ENCODE measurements at regions of chr16 and their contacts with region 1.

Region 1: DNA sequence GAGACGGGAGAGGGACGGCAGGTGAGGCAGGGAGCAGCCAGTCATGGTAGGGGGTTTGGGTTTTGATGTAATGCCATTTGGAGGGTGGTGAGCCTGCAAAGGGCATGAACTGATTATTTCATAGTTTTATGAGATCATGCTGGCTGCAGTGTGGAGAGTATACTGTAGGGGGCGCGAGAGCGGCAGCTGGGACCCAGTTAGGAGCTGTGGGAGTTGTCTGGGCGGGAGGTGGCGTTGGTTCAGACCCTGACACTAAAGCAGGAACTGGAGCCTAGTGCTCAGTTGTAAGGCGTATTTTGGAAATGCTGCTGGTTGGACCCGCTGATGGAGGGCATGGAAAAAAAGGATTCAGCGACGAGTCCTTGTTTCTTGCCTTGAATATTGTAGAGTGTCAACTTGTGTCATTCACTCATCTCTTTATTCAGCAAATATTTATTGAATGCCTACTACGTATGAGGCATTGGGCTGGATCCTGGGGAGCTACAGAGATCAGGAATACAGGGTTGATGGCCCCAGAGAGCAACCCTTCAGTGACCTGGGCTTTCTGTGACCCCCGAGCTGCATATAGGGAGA is 23.7 kb upstream of the KDM8 start:
- DNase-seq: peak; percentile 42
- H3K4me3 ChIP-seq: no peak overlapping the region
- H3K27ac ChIP-seq: no peak overlapping the region
- H3K4me1 ChIP-seq: peaks cover 13% of the 10 kb centered on the region
- H3K27me3 ChIP-seq: no peaks in the 10 kb centered on the region
- CTCF ChIP-seq: peak; percentile 82 to 90

Region 2: DNA sequence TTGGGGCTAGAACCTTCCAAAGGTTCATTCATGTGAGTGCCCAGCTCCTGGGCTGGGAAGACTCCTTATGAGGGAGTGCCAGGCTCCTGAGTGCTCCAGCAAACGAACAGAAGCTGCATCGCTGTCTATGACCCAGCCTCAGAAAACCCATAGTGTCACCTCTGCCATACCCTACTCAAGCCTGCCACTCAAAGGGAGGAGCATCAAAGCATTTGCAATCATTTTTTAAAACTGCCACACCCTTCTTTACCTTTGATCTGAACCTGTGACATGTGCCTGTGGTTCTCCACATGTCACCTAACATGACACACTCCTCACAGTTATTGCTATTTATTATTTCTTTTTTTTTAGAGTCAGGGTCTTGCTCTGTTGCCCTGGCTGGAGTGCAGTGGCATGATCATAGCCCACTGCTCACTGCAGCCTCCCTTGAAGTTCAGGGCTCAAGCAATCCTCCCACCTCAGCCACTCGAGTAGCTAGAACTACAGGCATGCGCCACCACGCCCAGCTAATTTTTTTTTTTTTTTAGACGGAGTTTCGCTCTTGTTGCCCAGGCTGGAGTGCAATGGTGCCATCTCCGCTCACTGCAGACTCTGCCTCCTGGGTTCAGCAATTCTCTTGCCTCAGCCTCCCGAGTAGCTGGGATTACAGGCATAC is 16.5 kb after region 1 on chr16:
- CTCF ChIA-PET with region 1: no interaction called
- dilution Hi-C with region 1: no loop called
- in situ Hi-C with region 1: no loop called
- intact Hi-C with region 1: loop called (anchors 2 kb)
- DNase-seq: no peak
- H3K4me3 ChIP-seq: no peak overlapping the region
- H3K27ac ChIP-seq: no peak overlapping the region
- H3K4me1 ChIP-seq: peaks cover 21% of the 10 kb centered on the region
- H3K27me3 ChIP-seq: no peaks in the 10 kb centered on the region
- CTCF ChIP-seq: no peak

Region 3: DNA sequence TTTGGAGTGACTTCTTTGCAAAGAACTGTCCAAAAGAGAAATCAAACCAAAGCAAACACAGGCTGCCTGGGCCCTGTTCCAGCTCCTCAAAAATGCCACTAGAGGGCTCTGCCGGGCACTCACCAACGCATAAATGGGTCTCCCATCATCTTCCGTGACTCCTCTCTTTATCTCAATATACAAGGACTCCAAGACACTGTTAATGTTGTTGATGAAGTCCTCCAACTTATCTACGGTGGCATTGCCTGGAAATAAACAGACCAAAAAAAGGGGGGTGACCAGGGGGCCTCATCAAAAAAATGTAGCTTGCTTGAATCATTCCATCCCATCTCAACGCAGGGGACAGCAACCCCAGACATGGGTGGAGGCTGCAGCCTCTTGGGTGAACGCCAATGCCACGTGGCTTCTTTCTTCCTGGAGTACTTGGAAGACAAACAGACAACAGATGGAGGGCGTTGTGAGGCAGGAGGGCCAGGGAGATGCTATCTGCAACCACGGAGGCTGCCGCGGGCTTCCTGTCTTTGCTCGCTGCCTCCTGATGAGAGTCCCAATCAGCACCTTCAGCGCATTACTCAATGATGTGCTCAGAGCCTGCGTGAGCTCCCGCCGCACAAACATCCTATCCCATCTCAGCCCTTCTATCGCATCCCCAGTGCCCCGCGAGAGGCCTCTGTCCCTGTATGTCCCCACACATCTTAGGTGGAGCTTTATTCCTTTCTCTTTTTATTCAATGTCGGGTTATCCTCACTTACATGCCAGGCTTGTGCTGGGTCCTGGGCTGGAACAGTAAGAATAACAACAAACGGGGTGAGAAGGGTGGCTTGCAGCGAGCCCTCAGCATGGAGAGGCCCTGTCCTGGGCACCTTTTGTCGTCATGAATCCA is 55.7 kb after region 1 on chr16:
- CTCF ChIA-PET with region 1: no interaction called
- dilution Hi-C with region 1: no loop called
- in situ Hi-C with region 1: no loop called
- intact Hi-C with region 1: loop called (anchors 5 kb)
- DNase-seq: peak; percentile 78
- H3K4me3 ChIP-seq: no peak overlapping the region
- H3K27ac ChIP-seq: peak overlapping the region; percentile 26
- H3K4me1 ChIP-seq: peaks cover 25% of the 10 kb centered on the region
- H3K27me3 ChIP-seq: no peaks in the 10 kb centered on the region
- CTCF ChIP-seq: peak; percentile 93 to 96

Region 4: DNA sequence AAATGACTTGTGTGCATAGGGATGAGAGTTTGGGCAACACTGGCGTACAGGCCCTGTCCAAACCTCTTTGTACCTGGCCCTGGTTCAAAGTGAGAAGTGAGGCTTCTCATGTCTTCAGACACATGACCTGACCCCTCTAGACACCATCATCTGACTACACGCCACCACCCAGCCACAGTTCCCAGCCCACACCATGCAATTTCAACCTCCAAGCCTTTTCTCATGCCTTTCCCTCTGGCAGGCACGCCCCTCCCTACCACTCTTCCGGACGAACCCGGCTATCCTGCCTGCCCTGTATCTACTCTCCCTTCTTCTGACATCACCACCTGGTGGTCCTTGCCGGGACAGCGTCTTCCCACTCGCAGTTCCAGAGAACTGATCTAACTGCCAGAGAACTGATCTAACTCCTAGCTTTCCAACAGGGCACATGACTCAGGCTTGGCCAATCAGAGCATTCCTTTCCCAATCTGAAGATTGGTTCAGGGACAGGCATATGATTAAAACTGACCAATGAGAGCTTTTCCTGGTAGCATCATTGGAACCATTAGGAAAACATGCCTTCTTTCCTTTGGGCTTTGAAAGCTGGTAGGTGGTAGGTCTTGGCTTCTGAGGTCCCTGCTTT is 195.3 kb after region 1 on chr16:
- CTCF ChIA-PET with region 1: interaction called, 4 read pairs
- dilution Hi-C with region 1: no loop called
- in situ Hi-C with region 1: loop called in 1 of 2 experiments (anchors 10 kb)
- intact Hi-C with region 1: no loop called
- DNase-seq: peak; percentile 72
- H3K4me3 ChIP-seq: no peak overlapping the region
- H3K27ac ChIP-seq: no peak overlapping the region
- H3K4me1 ChIP-seq: no peaks in the 10 kb centered on the region
- H3K27me3 ChIP-seq: no peaks in the 10 kb centered on the region
- CTCF ChIP-seq: peak; percentile 45 to 47

Region 5: GRCh38 chr16:27461483-27462171 is 282.0 kb after region 1 on chr16:
- CTCF ChIA-PET with region 1: no interaction called
- dilution Hi-C with region 1: no loop called
- in situ Hi-C with region 1: no loop called
- intact Hi-C with region 1: loop called (anchors 1 kb)
- DNase-seq: no peak
- H3K4me3 ChIP-seq: no peak overlapping the region
- H3K27ac ChIP-seq: no peak overlapping the region
- H3K4me1 ChIP-seq: peaks cover 12% of the 10 kb centered on the region
- H3K27me3 ChIP-seq: no peaks in the 10 kb centered on the region
- CTCF ChIP-seq: no peak